Adrenal gland (tissue), 19 donors: ENCODE measurements at regions of chr11 and their contacts with region 1.

Region 1: DNA sequence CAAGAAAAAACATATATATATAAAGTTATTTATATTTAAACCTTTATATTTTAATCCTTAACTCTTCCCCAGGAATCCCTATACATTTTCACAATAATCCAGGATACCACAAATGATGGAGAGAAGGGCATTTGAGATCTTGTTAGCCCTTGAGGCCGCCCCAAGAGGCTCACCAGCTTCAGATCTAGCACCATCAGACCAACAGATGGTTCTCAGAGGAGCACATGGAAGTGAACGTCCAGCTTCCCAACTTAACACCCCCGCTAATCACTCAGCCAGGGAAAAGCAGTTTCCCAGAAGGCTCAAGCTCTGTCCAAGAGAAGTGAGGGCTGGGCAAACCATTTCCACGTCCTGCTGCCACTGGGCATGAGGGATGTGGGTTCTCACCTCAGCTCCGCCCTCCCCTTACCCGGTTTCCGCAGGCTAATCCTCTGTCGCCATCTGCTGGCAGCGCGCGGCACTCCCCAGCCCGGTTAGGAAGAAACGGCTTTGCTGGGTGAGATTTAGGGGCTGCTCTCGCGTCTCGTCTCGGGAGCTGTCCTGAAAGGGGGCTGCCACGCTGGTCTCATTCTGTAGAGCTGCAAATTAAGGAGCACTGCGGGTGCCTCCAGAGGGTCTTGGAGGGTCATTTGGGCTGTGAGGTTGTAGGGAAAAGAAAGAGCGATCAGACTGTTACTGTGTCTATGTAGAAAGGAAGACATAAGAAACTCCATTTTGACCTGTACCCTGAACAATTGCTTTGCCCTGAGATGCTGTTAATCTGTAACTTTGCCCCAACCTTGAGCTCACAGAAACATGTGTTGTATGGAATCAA is 6.8 kb upstream of the FAM111A start:
- DNase-seq: peak; percentile 78 to 92 (median 87)
- H3K4me3 ChIP-seq: peak overlapping the region in 1 of 4 donors; percentile 8
- H3K27ac ChIP-seq: no peak overlapping the region
- H3K4me1 ChIP-seq: no peaks in the 10 kb centered on the region
- H3K27me3 ChIP-seq: no peaks in the 10 kb centered on the region
- CTCF ChIP-seq: peak; percentile 89 to 97 (median 96)
- POLR2A ChIP-seq: no peak

Region 2: GRCh38 chr11:58654079-58654907 is 481.6 kb before region 1 on chr11:
- intact Hi-C with region 1: loop called in 1 of 2 experiments (anchors 10 kb)
- DNase-seq: peak; percentile 75 to 92 (median 89)
- H3K4me3 ChIP-seq: no peak overlapping the region
- H3K27ac ChIP-seq: no peak overlapping the region
- H3K4me1 ChIP-seq: no peaks in the 10 kb centered on the region
- H3K27me3 ChIP-seq: no peaks in the 10 kb centered on the region
- CTCF ChIP-seq: peak; percentile 78 to 93 (median 84)
- POLR2A ChIP-seq: no peak

Region 3: GRCh38 chr11:59097113-59097708 is 38.6 kb before region 1 on chr11:
- intact Hi-C with region 1: loop called in 1 of 2 experiments (anchors 5 kb)
- DNase-seq: peak; percentile 50 to 86 (median 64)
- H3K4me3 ChIP-seq: no peak overlapping the region
- H3K27ac ChIP-seq: no peak overlapping the region
- H3K4me1 ChIP-seq: peaks cover 5 to 10% of the 10 kb centered on the region in 2 donors
- H3K27me3 ChIP-seq: no peaks in the 10 kb centered on the region
- CTCF ChIP-seq: peak; percentile 44 to 71 (median 60)
- POLR2A ChIP-seq: no peak

Region 4: GRCh38 chr11:59891781-59892181 is 755.9 kb after region 1 on chr11:
- intact Hi-C with region 1: no loop called
- DNase-seq: no peak
- H3K4me3 ChIP-seq: no peak overlapping the region
- H3K27ac ChIP-seq: no peak overlapping the region
- H3K4me1 ChIP-seq: no peaks in the 10 kb centered on the region
- H3K27me3 ChIP-seq: no peaks in the 10 kb centered on the region
- CTCF ChIP-seq: no peak
- POLR2A ChIP-seq: no peak